Psoas muscle (tissue), 8 donors: ENCODE measurements at regions of chr1 and their contacts with region 1.

Region 1: GRCh38 chr1:168709405-168710305 is 19.4 kb downstream of the DPT start:
- DNase-seq: no peak
- ATAC-seq: peak; percentile 56 to 81 (median 62)
- H3K4me3 ChIP-seq: no peak overlapping the region
- H3K27ac ChIP-seq: peak overlapping the region; percentile 25
- H3K4me1 ChIP-seq: peaks cover 8% of the 10 kb centered on the region
- H3K27me3 ChIP-seq: no peaks in the 10 kb centered on the region
- CTCF ChIP-seq: no peak

Region 2: DNA sequence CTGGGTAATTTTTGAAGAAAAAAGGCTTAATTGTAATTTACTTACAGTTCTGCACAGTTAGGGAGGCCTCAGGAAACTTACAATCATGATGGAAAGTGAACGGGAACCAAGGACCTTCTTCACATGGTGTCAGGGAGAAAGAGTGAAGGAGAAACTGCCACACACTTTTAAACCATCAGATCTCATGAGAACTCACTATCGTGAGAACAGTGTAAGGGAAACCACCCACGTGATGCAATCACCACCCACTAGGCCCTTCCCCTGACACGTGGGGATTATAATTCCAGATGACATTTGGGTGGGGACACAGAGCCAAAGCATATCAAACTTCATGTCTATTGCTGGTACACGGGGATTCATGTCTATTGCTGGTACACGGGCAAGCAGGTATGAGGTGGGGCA is 489.2 kb before region 1 on chr1:
- intact Hi-C with region 1: no loop called
- DNase-seq: no peak
- ATAC-seq: no peak
- H3K4me3 ChIP-seq: no peak overlapping the region
- H3K27ac ChIP-seq: no peak overlapping the region
- H3K4me1 ChIP-seq: no peaks in the 10 kb centered on the region
- H3K27me3 ChIP-seq: no peaks in the 10 kb centered on the region
- CTCF ChIP-seq: no peak

Region 3: DNA sequence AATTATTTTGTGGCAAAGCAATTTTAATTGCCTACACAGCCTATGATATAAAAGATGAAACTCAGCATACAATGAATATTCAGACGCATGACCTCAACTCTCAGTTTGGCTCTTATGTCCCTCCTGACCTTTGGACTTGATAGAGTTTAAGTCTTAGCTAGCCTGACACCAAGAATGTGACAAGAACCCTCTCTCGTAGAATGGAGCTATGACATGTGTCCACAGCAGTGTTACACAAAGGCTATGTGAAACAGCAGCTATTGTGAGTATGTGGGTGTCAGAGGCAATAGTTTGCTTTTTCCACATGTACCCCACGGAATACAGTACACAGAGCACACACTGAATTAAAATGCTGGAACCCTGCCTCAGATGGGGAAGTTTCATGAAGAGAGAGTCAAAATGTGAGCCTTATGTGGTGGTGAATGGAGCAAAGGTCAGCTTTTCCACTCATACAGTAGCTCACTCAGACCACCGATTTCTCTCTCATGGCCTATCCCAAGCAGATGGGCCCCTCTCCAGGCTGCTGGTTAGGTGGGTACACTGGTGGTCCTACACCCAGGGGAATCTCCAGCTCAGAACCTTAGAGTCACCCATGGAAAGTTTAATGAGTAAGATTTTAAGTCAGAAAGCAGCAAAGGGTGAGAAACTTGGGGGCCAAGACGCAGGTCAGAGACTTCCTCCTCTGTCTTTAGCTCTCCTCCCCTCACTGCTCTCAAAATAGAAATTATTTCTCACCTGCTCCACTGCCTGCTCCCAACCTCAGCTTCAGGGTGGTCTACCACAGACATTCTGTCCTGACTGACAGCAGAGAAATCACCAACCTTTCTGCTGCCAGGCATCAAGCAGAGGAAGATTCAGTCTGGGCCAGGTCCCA is 155.7 kb before region 1 on chr1:
- intact Hi-C with region 1: no loop called
- DNase-seq: no peak
- ATAC-seq: no peak
- H3K4me3 ChIP-seq: no peak overlapping the region
- H3K27ac ChIP-seq: no peak overlapping the region
- H3K4me1 ChIP-seq: no peaks in the 10 kb centered on the region
- H3K27me3 ChIP-seq: no peaks in the 10 kb centered on the region
- CTCF ChIP-seq: no peak

Region 4: DNA sequence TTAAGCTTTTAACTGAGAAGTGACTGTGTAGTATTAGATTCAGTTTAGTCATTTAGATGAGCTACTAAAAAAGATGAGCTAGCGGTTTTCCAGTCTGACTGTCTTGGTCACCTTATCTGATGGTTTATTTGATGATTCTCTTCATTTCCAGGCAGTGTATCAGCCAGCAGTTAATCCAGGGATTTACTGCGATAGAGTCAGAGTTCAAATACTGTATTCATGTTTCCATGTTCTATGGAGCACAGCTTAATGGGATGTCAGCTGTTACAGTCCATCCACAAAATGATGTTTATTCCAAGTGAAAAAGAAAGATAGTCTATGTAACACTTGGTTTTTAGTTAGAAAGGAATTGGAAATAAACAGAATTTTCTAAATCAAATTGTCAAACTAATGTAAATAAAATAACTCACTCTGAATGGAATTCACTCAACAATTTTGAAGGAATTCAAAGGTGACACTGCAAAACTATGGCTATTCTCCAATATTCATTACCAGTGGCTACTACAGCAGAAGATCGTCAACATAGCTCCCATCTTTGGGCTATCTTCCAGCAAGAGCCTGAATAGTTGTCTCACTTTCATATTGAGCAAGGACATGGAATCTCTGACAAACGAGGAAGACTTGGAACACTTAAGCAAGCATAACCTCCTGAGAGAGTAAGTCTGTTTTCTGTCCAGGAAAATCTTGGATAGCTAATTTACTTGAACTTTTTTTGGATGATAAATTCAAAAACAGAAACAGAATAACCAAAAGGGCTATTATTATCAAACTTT is 74.0 kb after region 1 on chr1:
- intact Hi-C with region 1: loop called in 1 of 2 experiments (anchors 5 kb)
- DNase-seq: no peak
- ATAC-seq: peak; percentile 84 to 95 (median 88)
- H3K4me3 ChIP-seq: peak overlapping the region; percentile 4
- H3K27ac ChIP-seq: peak overlapping the region; percentile 51
- H3K4me1 ChIP-seq: peaks cover 15% of the 10 kb centered on the region
- H3K27me3 ChIP-seq: no peaks in the 10 kb centered on the region
- CTCF ChIP-seq: no peak

Region 5: DNA sequence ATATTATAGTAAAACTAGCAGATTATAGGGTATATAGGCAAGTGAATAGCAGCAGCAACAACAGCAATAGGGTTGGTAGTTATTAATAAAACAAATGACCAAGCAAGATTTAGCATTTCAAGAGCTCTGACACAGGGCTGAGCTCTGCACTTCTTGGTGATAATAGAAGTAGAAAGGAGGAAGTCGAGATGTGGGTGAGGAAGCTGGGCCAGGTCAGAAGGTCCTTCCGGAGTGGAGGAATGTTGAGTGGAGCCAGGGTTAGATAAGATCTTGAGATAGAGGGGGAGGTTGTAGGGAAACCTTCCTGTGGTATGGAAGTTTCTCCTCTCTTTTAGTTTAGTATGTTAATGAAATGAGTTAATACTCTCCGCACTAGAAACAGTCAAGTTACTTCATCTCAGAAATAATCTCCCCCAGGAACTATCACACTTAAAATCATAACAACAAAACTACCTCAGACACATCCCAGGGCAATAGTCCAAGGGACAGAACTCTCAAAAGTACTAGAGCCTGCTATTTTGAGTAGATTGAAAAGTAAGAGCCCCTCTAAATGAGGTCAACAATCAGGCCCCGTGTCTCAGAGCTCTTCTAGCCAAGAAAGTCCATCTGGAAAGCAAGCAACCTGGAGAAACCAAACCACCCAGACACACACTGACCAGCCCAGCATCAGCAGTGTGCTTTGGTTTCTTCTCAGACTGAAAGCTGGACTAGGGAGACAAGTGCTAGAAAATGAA is 351.4 kb after region 1 on chr1:
- intact Hi-C with region 1: no loop called
- DNase-seq: no peak
- ATAC-seq: peak in 3 of 4 donors; percentile 52 to 66 (median 60)
- H3K4me3 ChIP-seq: no peak overlapping the region
- H3K27ac ChIP-seq: peak overlapping the region; percentile 3
- H3K4me1 ChIP-seq: peaks cover 8% of the 10 kb centered on the region
- H3K27me3 ChIP-seq: no peaks in the 10 kb centered on the region
- CTCF ChIP-seq: no peak